Breast epithelium (tissue), 4 donors: ENCODE measurements at regions of chr20 and their contacts with region 1.

Region 1: GRCh38 chr20:19456596-19457395 is 244.4 kb downstream of the SLC24A3 start:
- DNase-seq: no peak
- H3K4me3 ChIP-seq: no peak overlapping the region
- H3K27ac ChIP-seq: no peak overlapping the region
- H3K4me1 ChIP-seq: no peaks in the 10 kb centered on the region
- H3K27me3 ChIP-seq: no peaks in the 10 kb centered on the region
- CTCF ChIP-seq: no peak
- POLR2A ChIP-seq: no peak

Region 2: DNA sequence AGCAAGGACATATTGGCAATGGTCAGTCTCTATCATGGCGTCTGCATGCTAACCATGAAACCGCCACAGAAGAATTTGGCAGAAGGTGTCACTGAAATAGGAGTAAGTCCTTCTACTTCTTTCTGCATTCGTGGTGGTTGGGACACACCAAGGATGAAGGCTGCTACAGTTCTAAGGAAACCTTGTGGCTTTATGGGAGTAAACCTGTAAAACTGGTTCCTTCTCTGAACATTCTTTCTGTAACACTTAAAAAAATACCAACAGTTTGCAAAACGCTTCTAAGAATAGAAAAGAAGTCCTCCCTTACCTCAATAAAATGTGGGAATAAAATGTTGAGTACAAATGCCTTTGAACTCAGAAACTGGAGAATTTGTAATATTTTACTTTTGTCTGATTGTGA is 49.0 kb before region 1 on chr20:
- intact Hi-C with region 1: no loop called
- DNase-seq: peak in 1 of 2 donors; percentile 78
- H3K4me3 ChIP-seq: no peak overlapping the region
- H3K27ac ChIP-seq: peak overlapping the region; percentile 60 to 77
- H3K4me1 ChIP-seq: peaks cover 0 to 6% of the 10 kb centered on the region in 2 donors
- H3K27me3 ChIP-seq: no peaks in the 10 kb centered on the region
- CTCF ChIP-seq: no peak
- POLR2A ChIP-seq: no peak

Region 3: GRCh38 chr20:19492687-19493336 is 36.0 kb after region 1 on chr20:
- intact Hi-C with region 1: loop called (anchors 2 kb)
- DNase-seq: no peak
- H3K4me3 ChIP-seq: no peak overlapping the region
- H3K27ac ChIP-seq: no peak overlapping the region
- H3K4me1 ChIP-seq: no peaks in the 10 kb centered on the region
- H3K27me3 ChIP-seq: no peaks in the 10 kb centered on the region
- CTCF ChIP-seq: no peak
- POLR2A ChIP-seq: no peak